ENCODE measurements at regions of chr20 and their contacts with region 1.

Region 1: GRCh38 chr20:23420943-23421931 is at the start of gene NAPB:
- DNase-seq: peak; percentile 96 to 97
- ATAC-seq: peak; percentile 98 to 99 (median 99)
- H3K4me3 ChIP-seq: peak within 1 kb of the TSS; percentile 82 to 98 (median 94)
- H3K27ac ChIP-seq: peak within 1 kb of the TSS; percentile 78 to 95 (median 94)
- H3K4me1 ChIP-seq: peaks cover 0 to 40% (median 30%) of the 10 kb centered on the region in 9 donors
- H3K27me3 ChIP-seq: peaks cover 0 to 5% (median 0%) of the 10 kb centered on the region in 7 donors
- CTCF ChIP-seq: peak; percentile 45 to 73 (median 62)
- total RNA-seq, gene NAPB: 3.1 to 7.2 (median 6.1) TPM

Region 2: DNA sequence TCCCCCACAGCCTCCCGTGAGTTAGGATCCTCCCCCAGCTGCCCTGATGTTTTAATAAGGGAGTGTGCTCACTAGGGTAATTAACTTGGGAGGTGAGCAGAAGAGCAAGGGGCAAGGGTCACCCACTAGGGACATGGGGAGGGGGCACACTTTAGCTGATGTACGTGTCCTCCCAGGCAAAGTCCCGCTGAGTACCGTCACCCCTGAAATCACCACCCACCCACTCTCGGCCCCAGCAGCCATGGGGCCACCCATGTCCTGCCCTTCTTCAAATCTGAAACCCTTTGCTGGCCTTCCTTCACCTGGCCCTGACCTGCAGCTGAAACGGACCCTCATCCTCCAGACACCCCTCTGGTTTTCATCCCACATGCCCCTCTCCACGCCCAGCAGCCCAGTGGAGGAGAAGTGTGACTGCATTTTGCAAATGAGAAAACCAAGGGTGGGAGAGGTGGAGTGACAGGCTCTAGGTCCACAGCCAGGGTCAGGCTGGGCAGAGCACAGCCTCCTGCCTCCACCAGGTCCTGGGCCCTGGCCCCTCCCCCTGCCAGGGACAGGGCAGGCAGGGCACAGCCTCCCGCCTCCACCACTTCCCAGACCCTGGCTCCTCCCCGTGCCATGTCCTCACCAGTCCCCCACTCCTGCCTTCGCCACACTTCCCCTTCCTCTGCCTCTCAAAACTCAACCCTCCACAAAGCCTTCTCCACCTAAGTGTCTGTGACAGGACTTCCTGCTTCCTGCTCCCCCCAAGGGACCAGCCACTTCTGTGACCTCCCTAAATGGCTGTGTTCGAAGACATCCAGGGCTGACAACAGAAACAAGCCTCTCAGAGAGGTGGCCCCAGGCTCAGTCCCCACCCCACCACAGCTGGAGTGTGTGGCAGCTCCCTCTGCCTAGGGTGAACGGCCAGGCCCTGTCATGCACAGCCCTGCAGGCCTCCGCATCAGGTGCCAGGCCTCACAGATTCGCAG is 1621.6 kb after region 1 on chr20:
- intact Hi-C with region 1: loop called in 1 of 10 experiments (anchors 10 kb)
- DNase-seq: peak; percentile 70 to 76
- ATAC-seq: peak; percentile 35 to 51 (median 41)
- H3K4me3 ChIP-seq: no peak overlapping the region
- H3K27ac ChIP-seq: peak overlapping the region; percentile 77 to 98 (median 90)
- H3K4me1 ChIP-seq: peaks cover 66 to 100% (median 97%) of the 10 kb centered on the region in 9 donors
- H3K27me3 ChIP-seq: no peaks in the 10 kb centered on the region
- CTCF ChIP-seq: no peak

Measured in heart right ventricle (tissue), 16 donors.